Caco-2 (cell line): ENCODE measurements at regions of chr16 and their contacts with region 1.

Region 1: GRCh38 chr16:56789360-56789759 is 59.4 kb downstream of the NUP93 start:
- DNase-seq: peak; percentile 52 to 62
- H3K4me3 ChIP-seq: no peak overlapping the region
- H3K4me3 Mint-ChIP-seq: no peak overlapping the region
- H3K27ac Mint-ChIP-seq: no peak overlapping the region
- H3K4me1 ChIP-seq: peaks cover 13% of the 10 kb centered on the region
- H3K4me1 Mint-ChIP-seq: peaks cover 30% of the 10 kb centered on the region
- H3K27me3 ChIP-seq: no peaks in the 10 kb centered on the region
- H3K27me3 Mint-ChIP-seq: no peaks in the 10 kb centered on the region
- CTCF ChIP-seq: peak; percentile 44 to 60

Region 2: GRCh38 chr16:56576585-56577293 is 212.6 kb before region 1 on chr16:
- CTCF ChIA-PET with region 1: no interaction called
- POLR2A ChIA-PET with region 1: no interaction called
- intact Hi-C with region 1: loop called (anchors 2 kb)
- DNase-seq: peak; percentile 84 to 85
- H3K4me3 ChIP-seq: no peak overlapping the region
- H3K4me3 Mint-ChIP-seq: no peak overlapping the region
- H3K27ac Mint-ChIP-seq: peak overlapping the region; percentile 18
- H3K4me1 ChIP-seq: no peaks in the 10 kb centered on the region
- H3K4me1 Mint-ChIP-seq: no peaks in the 10 kb centered on the region
- H3K27me3 ChIP-seq: no peaks in the 10 kb centered on the region
- H3K27me3 Mint-ChIP-seq: peaks cover 8% of the 10 kb centered on the region
- CTCF ChIP-seq: peak; percentile 64 to 77

Region 3: GRCh38 chr16:56729735-56730662 is 59.4 kb before region 1 on chr16 and contains the start of gene NUP93:
- CTCF ChIA-PET with region 1: interaction called, 3 read pairs
- POLR2A ChIA-PET with region 1: no interaction called
- intact Hi-C with region 1: loop called (anchors 1 kb)
- DNase-seq: peak; percentile 94 to 96
- H3K4me3 ChIP-seq: peak within 1 kb of the TSS; percentile 82
- H3K4me3 Mint-ChIP-seq: no peak within 1 kb of the TSS
- H3K27ac Mint-ChIP-seq: peak within 1 kb of the TSS; percentile 65
- H3K4me1 ChIP-seq: peaks cover 6% of the 10 kb centered on the region; the same call in 1 of the 2 replicates
- H3K4me1 Mint-ChIP-seq: peaks cover 10% of the 10 kb centered on the region
- H3K27me3 ChIP-seq: no peaks in the 10 kb centered on the region
- H3K27me3 Mint-ChIP-seq: no peaks in the 10 kb centered on the region
- CTCF ChIP-seq: no peak
- total RNA-seq, gene NUP93: 148 and 149 TPM in 2 replicates

Region 4: DNA sequence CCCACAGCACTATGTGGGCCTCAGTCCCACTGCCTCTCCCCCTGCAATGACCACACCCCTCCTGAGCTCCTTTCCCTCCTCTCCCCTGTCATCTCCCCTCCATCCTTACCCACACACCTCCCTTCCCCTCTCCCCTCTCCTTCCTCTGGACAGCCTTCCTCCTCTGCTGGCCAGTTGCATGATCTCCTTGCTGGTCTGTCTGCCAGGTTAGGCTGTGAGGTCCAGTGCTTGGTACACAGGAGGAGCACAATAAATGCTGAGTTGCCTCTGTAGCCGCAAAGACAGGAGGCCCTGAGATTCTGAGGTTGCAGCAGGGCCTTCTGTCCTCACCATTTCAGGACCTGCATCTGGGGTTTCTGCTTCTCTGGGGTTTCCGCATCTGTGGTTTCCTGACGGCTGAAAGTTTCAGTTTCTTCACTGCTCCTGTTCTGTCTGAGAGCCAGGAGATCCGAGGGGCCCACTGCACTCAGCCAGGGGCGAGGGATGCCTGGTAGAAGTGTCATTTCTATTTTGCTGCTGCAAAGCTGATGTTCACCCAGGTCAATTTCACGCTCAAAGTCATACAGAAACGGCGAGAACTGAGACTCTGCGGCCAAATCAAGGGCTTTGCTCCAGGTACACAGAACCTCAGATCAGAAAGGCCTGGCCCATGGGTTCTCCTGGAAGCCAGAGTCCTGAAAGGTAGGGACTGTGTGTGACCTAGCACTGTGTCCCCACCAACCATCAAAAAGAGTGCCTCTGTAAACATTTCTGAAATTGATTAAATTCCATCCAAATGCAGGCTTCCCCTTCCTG is 71.1 kb after region 1 on chr16:
- CTCF ChIA-PET with region 1: interaction called, 11 read pairs
- POLR2A ChIA-PET with region 1: no interaction called
- intact Hi-C with region 1: no loop called
- DNase-seq: peak; percentile 60 to 68
- H3K4me3 ChIP-seq: no peak overlapping the region
- H3K4me3 Mint-ChIP-seq: peak overlapping the region; percentile 39
- H3K27ac Mint-ChIP-seq: peak overlapping the region; percentile 93
- H3K4me1 ChIP-seq: peaks cover 87% of the 10 kb centered on the region
- H3K4me1 Mint-ChIP-seq: peaks cover 86% of the 10 kb centered on the region
- H3K27me3 ChIP-seq: no peaks in the 10 kb centered on the region
- H3K27me3 Mint-ChIP-seq: no peaks in the 10 kb centered on the region
- CTCF ChIP-seq: no peak

Region 5: DNA sequence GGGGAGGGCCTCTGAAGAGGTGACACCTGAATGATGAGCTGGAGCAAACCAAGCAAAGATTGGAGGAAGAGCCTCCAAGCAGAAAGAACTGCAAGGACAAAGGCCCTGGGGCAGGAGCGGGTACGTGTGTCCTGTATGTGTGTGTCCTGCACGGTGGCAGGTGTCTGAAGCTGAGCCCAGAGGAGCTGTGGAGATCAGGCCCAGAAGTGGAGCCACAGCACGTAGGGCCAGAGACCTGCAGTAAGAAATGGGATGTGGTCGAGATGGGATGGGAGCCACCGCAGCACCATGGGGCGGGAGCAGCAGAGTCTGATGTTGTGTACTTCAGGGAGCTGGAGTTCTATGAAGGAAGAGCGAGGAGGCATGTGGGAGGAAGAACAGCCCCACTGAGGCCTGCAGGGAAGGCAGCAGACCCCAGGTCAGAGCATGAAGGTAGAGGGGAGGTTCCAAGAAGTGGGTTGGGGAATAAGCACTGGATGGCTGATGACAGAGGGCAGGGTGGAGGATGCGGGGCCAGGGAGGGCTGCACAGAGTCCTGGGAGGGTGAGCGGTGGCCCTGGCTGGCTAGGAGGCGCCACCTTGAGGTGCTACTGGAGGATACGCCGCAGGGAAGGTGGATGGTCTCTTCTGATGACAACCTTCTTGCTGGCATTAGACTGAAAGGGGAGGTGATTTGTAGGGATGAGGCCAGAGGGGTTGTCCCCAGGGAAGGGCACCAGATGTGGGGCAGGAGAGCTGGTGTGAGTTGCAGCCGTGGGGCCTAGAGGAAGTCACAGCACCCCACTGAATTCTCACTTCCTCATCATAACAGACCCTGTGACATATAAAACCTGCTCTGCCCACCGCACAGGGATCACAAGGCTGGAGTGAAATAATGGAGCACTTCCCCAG is 161.8 kb after region 1 on chr16:
- CTCF ChIA-PET with region 1: no interaction called
- POLR2A ChIA-PET with region 1: no interaction called
- intact Hi-C with region 1: loop called (anchors 1 kb)
- DNase-seq: peak; percentile 78 to 82
- H3K4me3 ChIP-seq: no peak overlapping the region
- H3K4me3 Mint-ChIP-seq: no peak overlapping the region
- H3K27ac Mint-ChIP-seq: peak overlapping the region; percentile 4
- H3K4me1 ChIP-seq: no peaks in the 10 kb centered on the region
- H3K4me1 Mint-ChIP-seq: peaks cover 16% of the 10 kb centered on the region
- H3K27me3 ChIP-seq: no peaks in the 10 kb centered on the region
- H3K27me3 Mint-ChIP-seq: no peaks in the 10 kb centered on the region
- CTCF ChIP-seq: peak; percentile 78 to 85